ENCODE measurements at regions of chr3 and their contacts with region 1.

Region 1: GRCh38 chr3:53375019-53375418 is 27.7 kb upstream of the DCP1A start:
- DNase-seq: peak; percentile 77
- CTCF ChIP-seq: peak; percentile 78

Region 2: DNA sequence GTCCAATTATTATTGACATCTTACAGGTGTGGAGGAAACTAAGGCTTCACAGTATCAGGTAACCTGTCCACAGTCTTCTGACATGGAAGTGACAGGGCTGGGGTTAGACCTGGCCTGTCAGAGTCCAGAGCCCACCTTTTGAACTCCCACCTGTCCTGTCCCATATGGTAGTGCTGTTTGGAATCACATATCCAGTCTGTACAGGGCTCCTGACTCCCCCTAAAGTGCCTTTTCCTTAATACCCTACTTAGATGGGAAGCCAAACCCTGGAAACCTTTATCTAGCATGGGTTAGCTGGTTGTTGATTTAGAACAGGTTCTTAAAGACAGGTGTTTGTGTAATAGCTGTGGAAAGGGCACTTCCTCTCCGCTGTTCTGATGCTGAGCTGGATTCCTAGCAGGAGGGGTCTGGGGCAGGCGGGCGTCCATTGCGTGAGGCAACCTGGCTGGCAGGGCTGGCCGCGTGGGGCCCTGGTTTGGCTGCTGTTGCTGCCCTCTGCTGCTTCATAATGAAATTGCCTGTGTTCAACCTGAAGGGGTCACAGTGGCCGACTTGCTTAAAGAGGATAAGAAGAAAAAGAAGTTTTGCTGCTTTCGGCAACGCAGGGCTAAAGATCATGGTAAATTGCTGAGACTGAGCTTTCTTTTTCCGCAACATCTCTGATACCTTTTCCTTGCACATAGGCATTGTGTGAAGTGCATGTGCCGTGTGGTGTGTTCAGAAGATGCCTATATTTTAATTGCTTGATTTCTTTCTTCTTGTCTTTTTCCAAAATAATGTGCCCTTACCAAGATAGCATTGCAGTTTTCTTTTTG is 335.0 kb after region 1 on chr3:
- in situ Hi-C with region 1: loop called (anchors 10 kb)
- DNase-seq: peak; percentile 73
- CTCF ChIP-seq: peak; percentile 75